ENCODE measurements at regions of chr17 and their contacts with region 1.

Region 1: GRCh38 chr17:32755045-32755805 is 121.7 kb downstream of the MYO1D start:
- DNase-seq: no peak
- ATAC-seq: peak in 3 of 4 donors; percentile 63 to 69 (median 64)
- H3K4me3 ChIP-seq: no peak overlapping the region
- H3K27ac ChIP-seq: no peak overlapping the region
- H3K4me1 ChIP-seq: peaks cover 0 to 5% (median 0%) of the 10 kb centered on the region in 12 donors
- H3K27me3 ChIP-seq: no peaks in the 10 kb centered on the region
- CTCF ChIP-seq: peak; percentile 16 to 71 (median 53)
- POLR2A ChIP-seq: no peak

Region 2: DNA sequence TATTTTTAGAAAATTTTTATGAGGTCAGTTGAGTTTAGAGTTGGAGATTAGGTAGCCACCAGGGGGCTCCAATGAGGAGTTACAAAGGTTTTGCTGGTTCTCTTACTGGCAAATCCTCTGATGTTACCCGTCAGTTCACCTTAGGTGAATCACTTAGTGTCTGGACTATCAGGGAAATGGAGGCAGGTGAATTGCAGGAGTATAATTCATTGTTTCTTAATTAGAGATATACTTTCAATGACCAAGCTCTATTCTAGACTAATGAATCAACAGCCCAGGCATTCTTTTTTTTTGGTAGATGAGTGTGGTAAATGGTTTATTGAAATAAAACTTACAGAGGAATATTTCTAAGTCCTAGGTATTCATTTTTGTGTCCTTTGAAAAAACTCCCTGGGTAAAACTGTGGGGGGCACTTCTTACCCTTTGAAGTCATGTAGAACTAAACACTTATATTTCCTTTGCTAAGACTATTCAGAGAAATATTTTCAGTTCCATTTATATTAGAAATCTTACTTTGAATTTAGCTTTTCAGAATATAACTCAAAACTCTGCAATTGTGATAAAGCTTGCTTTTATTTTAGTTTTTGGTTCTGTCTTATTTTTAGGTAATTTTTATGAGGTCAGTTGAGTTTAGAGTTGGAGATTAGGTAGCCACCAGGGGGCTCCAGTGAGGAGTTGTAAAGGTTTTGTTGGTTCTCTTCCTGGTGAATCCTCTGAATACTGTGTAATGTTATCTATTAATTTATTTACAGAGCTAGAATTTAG is 293.2 kb before region 1 on chr17:
- intact Hi-C with region 1: loop called in 7 of 10 experiments (anchors 2 to 5 kb)
- DNase-seq: peak in 2 of 5 donors; percentile 32 to 35
- ATAC-seq: peak in 2 of 4 donors; percentile 50 to 64
- H3K4me3 ChIP-seq: no peak overlapping the region
- H3K27ac ChIP-seq: no peak overlapping the region
- H3K4me1 ChIP-seq: peaks cover 0 to 13% (median 0%) of the 10 kb centered on the region in 12 donors
- H3K27me3 ChIP-seq: no peaks in the 10 kb centered on the region
- CTCF ChIP-seq: peak; percentile 41 to 67 (median 54)
- POLR2A ChIP-seq: no peak

Region 3: GRCh38 chr17:32479074-32479617 is 276.1 kb before region 1 on chr17:
- intact Hi-C with region 1: loop called in 9 of 10 experiments (anchors 2 to 5 kb)
- DNase-seq: no peak
- ATAC-seq: peak in 1 of 4 donors; percentile 19
- H3K4me3 ChIP-seq: no peak overlapping the region
- H3K27ac ChIP-seq: no peak overlapping the region
- H3K4me1 ChIP-seq: peaks cover 4 to 21% (median 14%) of the 10 kb centered on the region in 12 donors
- H3K27me3 ChIP-seq: no peaks in the 10 kb centered on the region
- CTCF ChIP-seq: no peak
- POLR2A ChIP-seq: no peak

Region 4: DNA sequence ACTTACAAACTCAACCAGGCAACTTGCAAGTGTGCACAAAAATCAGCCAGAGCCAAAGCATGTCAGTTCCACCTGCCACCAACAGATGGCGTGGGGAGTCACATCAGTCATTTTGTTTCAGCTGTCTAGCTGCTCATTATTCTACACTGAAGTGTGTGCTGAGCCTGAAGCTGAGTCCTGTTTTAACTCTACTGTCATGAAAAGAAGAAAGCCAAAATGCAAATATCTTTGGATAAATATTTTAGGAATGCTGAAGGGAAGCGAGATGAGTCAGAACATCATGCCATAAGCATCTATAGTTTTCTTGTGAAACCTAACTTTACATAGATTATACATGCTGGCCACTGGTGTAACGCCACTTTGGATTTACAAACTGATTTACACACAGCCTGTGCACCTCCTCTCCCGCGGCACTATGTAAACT is 95.8 kb before region 1 on chr17:
- intact Hi-C with region 1: loop called in 9 of 10 experiments (anchors 5 to 10 kb)
- DNase-seq: peak; percentile 52 to 68 (median 63)
- ATAC-seq: peak; percentile 44 to 87 (median 83)
- H3K4me3 ChIP-seq: no peak overlapping the region
- H3K27ac ChIP-seq: no peak overlapping the region
- H3K4me1 ChIP-seq: peaks cover 0 to 21% (median 8%) of the 10 kb centered on the region in 12 donors
- H3K27me3 ChIP-seq: no peaks in the 10 kb centered on the region
- CTCF ChIP-seq: peak; percentile 78 to 94 (median 90)
- POLR2A ChIP-seq: no peak

Region 5: GRCh38 chr17:32664936-32665583 is 90.2 kb before region 1 on chr17:
- intact Hi-C with region 1: loop called in 3 of 10 experiments (anchors 10 kb)
- DNase-seq: no peak
- ATAC-seq: peak in 1 of 4 donors; percentile 29
- H3K4me3 ChIP-seq: no peak overlapping the region
- H3K27ac ChIP-seq: no peak overlapping the region
- H3K4me1 ChIP-seq: no peaks in the 10 kb centered on the region
- H3K27me3 ChIP-seq: no peaks in the 10 kb centered on the region
- CTCF ChIP-seq: no peak
- POLR2A ChIP-seq: no peak

Region 6: GRCh38 chr17:32783602-32784001 is 28.4 kb after region 1 on chr17:
- intact Hi-C with region 1: no loop called
- DNase-seq: no peak
- ATAC-seq: peak in 2 of 4 donors; percentile 42 to 61
- H3K4me3 ChIP-seq: no peak overlapping the region
- H3K27ac ChIP-seq: no peak overlapping the region
- H3K4me1 ChIP-seq: no peaks in the 10 kb centered on the region
- H3K27me3 ChIP-seq: no peaks in the 10 kb centered on the region
- CTCF ChIP-seq: peak; percentile 74 to 91 (median 78)
- POLR2A ChIP-seq: no peak

Region 7: DNA sequence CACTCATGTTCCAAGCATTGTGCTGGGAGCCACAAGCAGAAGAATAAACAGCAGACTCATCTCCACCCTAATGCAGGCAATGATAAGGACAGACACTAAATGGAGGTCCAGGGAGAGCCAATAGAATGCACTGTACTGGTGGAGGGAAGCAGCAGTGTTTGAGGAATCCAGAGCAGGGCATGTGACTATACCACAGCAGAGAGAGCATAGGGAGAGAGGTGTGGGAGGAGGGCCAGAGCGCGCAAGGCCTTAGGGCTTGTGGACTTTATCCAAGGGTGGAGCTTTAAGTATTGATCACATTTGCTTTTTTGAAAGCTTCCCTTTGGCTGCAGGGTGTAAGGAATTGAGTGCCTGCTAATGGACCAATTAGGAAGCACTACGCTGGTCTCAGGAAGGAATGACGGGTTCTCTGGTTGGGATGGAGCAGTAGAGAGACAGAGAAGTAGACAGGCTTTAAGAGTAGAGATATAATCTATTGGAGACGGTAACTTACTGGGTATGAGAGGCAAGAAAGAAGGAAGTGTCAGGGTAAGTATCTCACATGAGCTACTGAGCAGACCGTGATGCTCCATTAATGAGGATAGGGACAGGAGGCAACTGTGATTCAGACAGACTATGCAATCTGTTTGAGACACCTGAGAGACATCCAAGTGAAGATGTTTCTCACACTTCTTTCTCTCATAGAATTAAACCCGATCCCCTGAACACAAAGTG is 39.5 kb after region 1 on chr17:
- intact Hi-C with region 1: no loop called
- DNase-seq: no peak
- ATAC-seq: no peak
- H3K4me3 ChIP-seq: no peak overlapping the region
- H3K27ac ChIP-seq: no peak overlapping the region
- H3K4me1 ChIP-seq: peaks cover 0 to 11% (median 0%) of the 10 kb centered on the region in 12 donors
- H3K27me3 ChIP-seq: no peaks in the 10 kb centered on the region
- CTCF ChIP-seq: no peak
- POLR2A ChIP-seq: no peak